MCF 10A (cell line): ENCODE measurements at regions of chr7 and their contacts with region 1.

Region 1: DNA sequence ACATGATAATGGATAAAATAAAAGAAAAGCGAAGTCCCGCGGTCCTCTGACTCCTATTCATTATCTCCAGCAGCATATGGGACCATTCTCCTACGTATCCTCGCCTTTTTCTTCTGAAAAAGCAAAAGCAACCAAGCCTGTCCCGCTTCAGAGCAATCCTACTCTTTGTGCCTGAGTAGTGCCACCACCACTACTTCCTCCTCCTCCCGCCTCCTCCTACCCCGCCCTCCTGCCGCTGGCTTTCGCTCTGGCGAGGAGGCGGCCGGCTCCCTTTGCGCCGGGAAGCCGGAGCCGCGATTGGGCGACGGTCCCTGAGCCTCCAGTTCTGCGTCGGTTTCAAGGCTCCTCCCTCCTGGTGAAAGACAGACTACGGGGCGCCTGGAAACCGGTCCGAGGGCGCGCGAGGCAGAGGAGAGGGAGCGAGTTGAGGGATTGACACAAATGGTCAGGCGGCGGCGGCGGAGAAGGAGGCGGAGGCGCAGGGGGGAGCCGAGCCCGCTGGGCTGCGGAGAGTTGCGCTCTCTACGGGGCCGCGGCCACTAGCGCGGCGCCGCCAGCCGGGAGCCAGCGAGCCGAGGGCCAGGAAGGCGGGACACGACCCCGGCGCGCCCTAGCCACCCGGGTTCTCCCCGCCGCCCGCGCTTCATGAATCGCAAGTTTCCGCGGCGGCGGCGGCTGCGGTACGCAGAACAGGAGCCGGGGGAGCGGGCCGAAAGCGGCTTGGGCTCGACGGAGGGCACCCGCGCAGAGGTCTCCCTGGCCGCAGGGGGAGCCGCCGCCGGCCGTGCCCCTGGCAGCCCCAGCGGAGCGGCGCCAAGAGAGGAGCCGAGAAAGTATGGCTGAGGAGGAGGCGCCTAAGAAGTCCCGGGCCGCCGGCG is at the start of gene FZD1:
- DNase-seq: peak; percentile 98
- H3K4me3 Mint-ChIP-seq: peak within 1 kb of the TSS; percentile 83
- H3K27ac Mint-ChIP-seq: peak within 1 kb of the TSS; percentile 61
- H3K4me1 Mint-ChIP-seq: peaks cover 20% of the 10 kb centered on the region
- H3K27me3 Mint-ChIP-seq: no peaks in the 10 kb centered on the region
- CTCF ChIP-seq: peak; percentile 10
- total RNA-seq, gene FZD1: 3.3 and 4.4 TPM in 2 replicates

Region 2: GRCh38 chr7:91089382-91089963 is 174.8 kb before region 1 on chr7:
- CTCF ChIA-PET with region 1: interaction called, 6 read pairs
- POLR2A ChIA-PET with region 1: interaction called, 3 read pairs
- intact Hi-C with region 1: loop called (anchors 1 kb)
- DNase-seq: peak; percentile 61
- H3K4me3 Mint-ChIP-seq: peak overlapping the region; percentile 56
- H3K27ac Mint-ChIP-seq: no peak overlapping the region
- H3K4me1 Mint-ChIP-seq: no peaks in the 10 kb centered on the region
- H3K27me3 Mint-ChIP-seq: no peaks in the 10 kb centered on the region
- CTCF ChIP-seq: peak; percentile 70

Region 3: DNA sequence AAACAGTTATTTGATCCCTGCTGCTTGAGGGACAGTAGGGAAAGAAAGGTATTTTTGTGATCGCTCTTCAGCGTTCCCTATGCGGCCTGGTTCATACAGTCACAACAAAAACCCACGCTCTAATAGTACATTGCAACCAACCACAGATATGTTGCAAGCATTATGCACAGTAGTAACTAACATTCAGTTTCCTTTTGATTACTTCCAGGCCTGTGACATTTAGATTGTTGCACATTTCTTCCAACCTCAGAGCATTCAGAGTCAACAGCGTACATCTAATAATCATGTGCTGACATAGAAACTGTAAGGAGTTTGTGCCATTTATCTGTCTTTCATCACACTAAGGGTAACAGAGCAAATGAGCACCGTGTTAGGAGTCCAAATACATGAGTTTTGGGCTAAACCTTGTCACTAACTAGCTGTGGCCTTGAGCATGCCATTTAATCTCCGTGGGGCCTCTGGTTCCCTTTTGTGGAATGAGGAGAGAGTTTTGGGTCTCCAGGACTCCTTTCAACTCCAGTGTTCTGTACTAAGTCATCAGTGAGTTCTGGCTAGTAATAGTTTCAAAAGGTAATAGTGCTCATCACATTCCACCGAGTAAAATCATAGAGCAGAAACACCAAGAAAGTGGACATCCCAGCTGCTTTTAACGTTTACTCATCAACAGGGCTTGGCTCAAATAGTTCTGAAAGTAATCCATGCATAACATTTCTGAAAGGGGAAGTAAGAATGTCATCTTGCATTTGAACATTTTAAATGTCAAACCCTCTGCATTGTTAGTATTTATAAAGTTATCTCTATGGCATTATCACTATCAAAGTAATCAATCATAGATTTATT is 99.1 kb before region 1 on chr7:
- CTCF ChIA-PET with region 1: interaction called, 3 read pairs
- POLR2A ChIA-PET with region 1: interaction called, 3 read pairs
- intact Hi-C with region 1: loop called (anchors 1 kb)
- DNase-seq: peak; percentile 55
- H3K4me3 Mint-ChIP-seq: peak overlapping the region; percentile 59
- H3K27ac Mint-ChIP-seq: peak overlapping the region; percentile 95
- H3K4me1 Mint-ChIP-seq: peaks cover 19% of the 10 kb centered on the region
- H3K27me3 Mint-ChIP-seq: no peaks in the 10 kb centered on the region
- CTCF ChIP-seq: no peak

Region 4: DNA sequence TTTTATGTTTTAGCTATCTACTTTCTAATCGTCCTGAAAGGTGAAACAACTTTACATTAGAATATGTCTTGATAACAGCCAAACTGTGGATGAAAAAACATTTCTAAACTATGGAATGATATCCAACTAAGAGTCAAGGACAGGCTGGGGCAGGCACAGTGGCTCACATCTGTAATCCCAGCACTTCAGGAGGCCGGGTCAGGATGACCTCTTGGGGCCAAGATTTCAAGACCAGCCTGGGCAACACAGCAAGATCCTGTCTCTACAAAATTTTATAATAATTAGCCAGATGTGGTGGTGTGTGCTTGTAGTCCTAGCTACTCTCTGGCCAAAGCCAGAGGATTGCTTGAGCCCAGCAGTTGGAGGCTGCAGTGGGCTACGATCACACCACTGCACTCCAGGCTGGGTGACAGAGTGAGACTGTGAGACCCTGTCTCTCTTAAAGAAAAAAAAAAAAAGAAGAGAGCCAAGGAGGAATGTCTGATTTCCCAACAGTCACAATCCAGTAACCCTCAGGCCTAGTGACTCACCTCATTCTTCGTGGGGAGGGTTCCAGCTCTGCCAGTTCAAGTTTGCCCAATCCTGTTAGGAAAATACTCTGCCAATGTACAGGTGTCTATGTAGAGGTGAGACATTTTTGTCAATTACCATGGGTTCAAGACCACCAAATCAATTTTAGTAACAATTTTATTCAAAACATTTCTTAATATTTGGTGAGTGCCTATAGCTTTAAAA is 14.6 kb before region 1 on chr7:
- CTCF ChIA-PET with region 1: interaction called, 8 read pairs
- POLR2A ChIA-PET with region 1: interaction called, 15 read pairs
- intact Hi-C with region 1: no loop called
- DNase-seq: peak; percentile 95
- H3K4me3 Mint-ChIP-seq: no peak overlapping the region
- H3K27ac Mint-ChIP-seq: peak overlapping the region; percentile 80
- H3K4me1 Mint-ChIP-seq: peaks cover 25% of the 10 kb centered on the region
- H3K27me3 Mint-ChIP-seq: no peaks in the 10 kb centered on the region
- CTCF ChIP-seq: no peak

Region 5: GRCh38 chr7:91320366-91321078 is 56.2 kb after region 1 on chr7:
- CTCF ChIA-PET with region 1: no interaction called
- POLR2A ChIA-PET with region 1: no interaction called
- intact Hi-C with region 1: no loop called
- DNase-seq: no peak
- H3K4me3 Mint-ChIP-seq: no peak overlapping the region
- H3K27ac Mint-ChIP-seq: no peak overlapping the region
- H3K4me1 Mint-ChIP-seq: no peaks in the 10 kb centered on the region
- H3K27me3 Mint-ChIP-seq: no peaks in the 10 kb centered on the region
- CTCF ChIP-seq: no peak

Region 6: GRCh38 chr7:91603707-91604106 is 339.4 kb after region 1 on chr7:
- CTCF ChIA-PET with region 1: no interaction called
- POLR2A ChIA-PET with region 1: no interaction called
- intact Hi-C with region 1: no loop called
- DNase-seq: no peak
- H3K4me3 Mint-ChIP-seq: no peak overlapping the region
- H3K27ac Mint-ChIP-seq: no peak overlapping the region
- H3K4me1 Mint-ChIP-seq: no peaks in the 10 kb centered on the region
- H3K27me3 Mint-ChIP-seq: no peaks in the 10 kb centered on the region
- CTCF ChIP-seq: no peak

Region 7: GRCh38 chr7:91784463-91784862 is 520.2 kb after region 1 on chr7:
- CTCF ChIA-PET with region 1: interaction called, 3 read pairs
- POLR2A ChIA-PET with region 1: no interaction called
- intact Hi-C with region 1: loop called (anchors 2 kb)
- DNase-seq: peak; percentile 63
- H3K4me3 Mint-ChIP-seq: no peak overlapping the region
- H3K27ac Mint-ChIP-seq: no peak overlapping the region
- H3K4me1 Mint-ChIP-seq: no peaks in the 10 kb centered on the region
- H3K27me3 Mint-ChIP-seq: no peaks in the 10 kb centered on the region
- CTCF ChIP-seq: peak; percentile 46